ENCODE measurements at regions of chr2 and their contacts with region 1.

Region 1: DNA sequence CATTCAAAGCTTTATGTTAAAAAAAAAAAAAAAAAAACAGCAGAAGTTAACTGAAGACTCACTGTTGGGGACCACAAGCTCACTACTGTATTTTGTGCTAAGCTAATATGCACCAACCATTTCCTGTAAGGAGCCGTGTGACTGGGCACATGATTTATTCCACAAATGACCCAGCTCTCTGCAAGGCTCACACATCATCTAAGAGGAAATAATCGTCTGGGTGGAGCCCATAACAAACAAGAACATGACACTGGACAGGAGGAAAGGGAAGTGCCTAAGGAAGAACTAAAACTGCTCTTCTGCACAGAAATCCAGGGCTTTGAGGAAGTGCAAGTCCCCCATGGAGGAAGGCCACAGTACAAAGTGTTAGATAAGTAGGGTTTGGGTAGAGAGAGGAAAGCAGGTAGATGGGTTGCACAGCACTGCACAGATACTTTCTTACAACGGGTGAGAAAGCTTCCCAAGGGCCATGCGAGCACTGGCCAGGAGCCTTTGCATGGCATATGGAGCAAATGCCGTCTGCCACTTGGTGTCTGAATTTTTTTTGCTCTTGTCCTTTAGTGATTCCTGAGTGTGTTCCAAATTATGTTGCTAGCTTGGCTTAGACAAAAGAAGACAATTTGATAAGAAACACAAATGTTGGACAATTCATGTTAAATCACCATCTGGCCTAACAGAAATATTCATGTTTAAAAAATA is 24.4 kb downstream of the NFE2L2 start:
- DNase-seq: peak; percentile 47
- ATAC-seq: peak; percentile 86
- H3K4me3 ChIP-seq: no peak overlapping the region
- H3K27ac ChIP-seq: peak overlapping the region; percentile 0; the same call in 1 of the 2 replicates
- H3K4me1 ChIP-seq: peaks cover 22% of the 10 kb centered on the region
- H3K27me3 ChIP-seq: no peaks in the 10 kb centered on the region
- CTCF ChIP-seq: no peak
- EP300 ChIP-seq: no peak
- POLR2A ChIP-seq: no peak
- RAD21 ChIP-seq: no peak

Region 2: DNA sequence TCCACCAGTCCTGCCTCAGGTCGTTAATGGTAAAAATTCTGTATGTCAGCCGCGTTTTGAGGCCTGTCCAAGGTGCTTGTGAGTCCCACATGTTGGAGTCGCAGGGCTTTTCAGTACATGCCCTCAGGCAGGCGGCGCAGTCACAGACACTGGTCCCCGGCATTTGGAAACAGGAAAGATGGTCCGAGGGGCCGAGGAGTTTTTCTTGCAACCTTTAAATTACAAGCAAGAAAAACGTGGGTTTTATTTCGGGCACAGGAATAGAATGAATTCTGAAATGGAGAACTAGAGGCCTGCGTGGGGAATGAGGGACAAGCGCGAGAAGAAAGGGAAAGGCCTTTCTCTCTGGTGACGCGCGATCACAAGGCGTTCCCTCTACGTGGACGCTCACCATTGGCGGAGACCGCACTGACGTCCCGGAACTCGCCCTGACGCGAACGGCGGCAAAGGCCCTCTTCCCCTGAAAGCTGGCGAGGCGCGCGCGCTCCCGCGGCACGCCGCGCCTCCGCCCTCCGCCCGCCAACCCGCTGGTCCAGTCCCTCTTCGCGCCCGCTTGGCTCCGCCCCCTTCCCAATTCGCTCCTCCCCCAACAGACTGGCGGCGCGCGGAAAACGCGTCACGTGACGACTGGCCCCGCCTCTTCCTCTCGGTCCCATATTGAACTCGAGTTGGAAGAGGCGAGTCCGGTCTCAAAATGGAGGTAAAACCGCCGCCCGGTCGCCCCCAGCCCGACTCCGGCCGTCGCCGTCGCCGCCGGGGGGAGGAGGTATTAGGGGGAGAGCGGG is 27.8 kb before region 1 on chr2 and contains the start of gene HNRNPA3:
- CTCF ChIA-PET with region 1: no interaction called
- POLR2A ChIA-PET with region 1: interaction called, 8 read pairs
- RAD21 ChIA-PET with region 1: interaction called, 10 read pairs
- SMC1A ChIA-PET with region 1: interaction called, 3 read pairs
- in situ Hi-C with region 1: no loop called
- intact Hi-C with region 1: no loop called
- DNase-seq: peak; percentile 95
- ATAC-seq: peak; percentile 88
- H3K4me3 ChIP-seq: peak within 1 kb of the TSS; percentile 95
- H3K27ac ChIP-seq: peak within 1 kb of the TSS; percentile 100
- H3K4me1 ChIP-seq: peaks cover 8% of the 10 kb centered on the region
- H3K27me3 ChIP-seq: no peaks in the 10 kb centered on the region
- CTCF ChIP-seq: peak in 2 of 3 experiments; percentile 16 to 20; a peak in 3 of 6 replicates
- EP300 ChIP-seq: peak in 1 of 2 experiments; percentile 43; a peak in 1 of 4 replicates
- POLR2A ChIP-seq: peak; percentile 46
- RAD21 ChIP-seq: no peak
- polyA plus RNA-seq, gene HNRNPA3: 221 to 285 TPM

Region 3: DNA sequence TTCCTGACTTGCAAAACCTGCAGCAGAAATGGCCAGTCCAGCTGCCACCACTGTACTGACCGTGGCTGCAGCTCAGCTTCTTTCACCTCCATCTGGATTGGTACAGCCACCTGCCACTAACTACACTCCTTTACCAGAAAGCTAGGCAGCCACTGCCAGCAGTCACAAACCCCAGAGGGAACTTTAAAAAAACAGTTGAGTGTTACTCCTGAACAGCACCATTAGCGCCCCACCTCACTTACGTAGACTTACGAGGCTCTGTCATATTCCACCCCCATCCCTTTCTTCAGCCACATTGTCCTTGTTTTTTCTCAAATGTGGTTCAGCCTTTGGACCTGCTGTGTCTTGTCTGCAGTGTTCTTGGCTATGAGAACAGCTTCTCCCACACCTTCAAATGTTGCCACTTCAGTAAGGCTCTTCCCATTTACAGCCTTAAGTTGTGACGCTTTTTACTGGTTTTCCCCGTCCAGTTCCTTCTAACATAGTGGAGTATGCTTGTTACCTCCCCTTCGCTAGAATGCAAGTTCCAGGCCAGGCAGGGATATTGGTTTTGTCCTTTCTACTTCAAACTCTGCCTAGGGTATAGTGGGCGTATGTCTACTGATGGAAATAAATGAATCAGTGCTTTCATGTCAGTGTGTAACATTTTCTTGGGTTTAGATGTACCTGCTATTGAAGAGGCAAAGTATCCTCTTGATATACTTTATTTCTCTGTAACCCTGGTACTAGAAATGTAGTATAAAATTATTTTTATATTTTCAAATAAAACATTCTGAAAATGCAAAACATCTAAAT is 10.4 kb before region 1 on chr2:
- CTCF ChIA-PET with region 1: interaction called, 4 read pairs
- POLR2A ChIA-PET with region 1: interaction called, 5 read pairs
- RAD21 ChIA-PET with region 1: interaction called, 3 read pairs
- SMC1A ChIA-PET with region 1: interaction called, 12 read pairs
- in situ Hi-C with region 1: no loop called
- intact Hi-C with region 1: no loop called
- DNase-seq: no peak
- ATAC-seq: peak; percentile 17
- H3K4me3 ChIP-seq: no peak overlapping the region
- H3K27ac ChIP-seq: no peak overlapping the region
- H3K4me1 ChIP-seq: no peaks in the 10 kb centered on the region
- H3K27me3 ChIP-seq: no peaks in the 10 kb centered on the region
- CTCF ChIP-seq: no peak
- EP300 ChIP-seq: no peak
- POLR2A ChIP-seq: peak; percentile 61
- RAD21 ChIP-seq: no peak

Region 4: DNA sequence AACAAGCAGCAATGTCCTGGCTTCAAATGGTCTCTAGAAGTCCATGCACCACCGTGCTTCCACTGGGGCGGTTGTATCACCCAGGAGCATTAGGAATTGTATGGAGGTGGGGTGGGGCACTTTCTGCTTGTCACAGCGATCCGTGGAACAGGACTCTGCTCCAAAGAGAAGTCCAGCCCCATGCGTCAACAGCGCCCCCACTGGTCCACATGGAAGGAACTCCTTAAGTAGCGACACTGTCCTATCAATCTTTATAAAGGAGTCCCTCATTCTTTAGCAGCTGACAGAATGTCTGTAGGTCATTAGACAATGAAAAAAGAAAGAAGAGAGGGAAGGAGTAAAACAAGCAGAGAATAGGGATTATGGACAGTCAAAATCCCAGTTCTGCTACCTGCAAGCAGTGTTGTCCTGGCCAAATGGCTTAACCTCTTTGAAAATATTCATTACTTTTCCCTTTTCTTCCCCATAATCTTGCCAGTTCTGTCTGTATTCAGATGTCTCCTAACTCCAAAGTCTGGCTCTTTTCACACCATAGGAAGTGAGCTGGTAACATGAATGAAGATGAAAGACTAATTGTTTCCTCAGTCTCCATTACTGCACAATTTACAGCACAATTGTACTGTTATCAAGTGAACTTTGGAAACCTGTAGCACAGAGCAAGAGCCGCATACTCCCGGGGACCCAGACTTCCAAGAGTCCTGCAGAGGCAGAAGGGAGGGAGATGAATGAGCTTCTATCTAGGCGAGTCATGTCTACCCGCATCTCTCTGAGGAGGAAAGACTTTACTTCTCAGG is 14.5 kb after region 1 on chr2:
- CTCF ChIA-PET with region 1: interaction called, 15 read pairs
- POLR2A ChIA-PET with region 1: interaction called, 5 read pairs
- RAD21 ChIA-PET with region 1: interaction called, 6 read pairs
- SMC1A ChIA-PET with region 1: interaction called, 23 read pairs
- in situ Hi-C with region 1: no loop called
- intact Hi-C with region 1: no loop called
- DNase-seq: no peak
- ATAC-seq: peak; percentile 9; the same call in 1 of the 3 replicates
- H3K4me3 ChIP-seq: no peak overlapping the region
- H3K27ac ChIP-seq: no peak overlapping the region
- H3K4me1 ChIP-seq: no peaks in the 10 kb centered on the region
- H3K27me3 ChIP-seq: no peaks in the 10 kb centered on the region
- CTCF ChIP-seq: peak in 2 of 3 experiments; percentile 26 to 41; a peak in 4 of 6 replicates
- EP300 ChIP-seq: no peak
- POLR2A ChIP-seq: no peak
- RAD21 ChIP-seq: 0 out of 2 replicates have a peak, but pooled peaks have one; percentile 9

Region 5: GRCh38 chr2:177568390-177568789 is 328.3 kb after region 1 on chr2:
- CTCF ChIA-PET with region 1: no interaction called
- POLR2A ChIA-PET with region 1: no interaction called
- RAD21 ChIA-PET with region 1: no interaction called
- SMC1A ChIA-PET with region 1: no interaction called
- in situ Hi-C with region 1: no loop called
- intact Hi-C with region 1: no loop called
- DNase-seq: no peak
- ATAC-seq: no peak; the same call in 1 of the 3 replicates
- H3K4me3 ChIP-seq: no peak overlapping the region
- H3K27ac ChIP-seq: no peak overlapping the region
- H3K4me1 ChIP-seq: no peaks in the 10 kb centered on the region
- H3K27me3 ChIP-seq: no peaks in the 10 kb centered on the region
- CTCF ChIP-seq: no peak
- EP300 ChIP-seq: no peak
- POLR2A ChIP-seq: no peak
- RAD21 ChIP-seq: no peak

Measured in GM12878 (cell line).